ENCODE measurements at regions of chr3 and their contacts with region 1.

Region 1: GRCh38 chr3:156382458-156383346 is 172.2 kb downstream of the SSR3 start:
- DNase-seq: peak; percentile 70
- ATAC-seq: peak; percentile 92
- H3K4me3 Mint-ChIP-seq: no peak overlapping the region
- H3K27ac Mint-ChIP-seq: no peak overlapping the region
- H3K4me1 Mint-ChIP-seq: peaks cover 4% of the 10 kb centered on the region
- H3K27me3 Mint-ChIP-seq: peaks cover 7% of the 10 kb centered on the region
- CTCF ChIP-seq: peak; percentile 73

Region 2: DNA sequence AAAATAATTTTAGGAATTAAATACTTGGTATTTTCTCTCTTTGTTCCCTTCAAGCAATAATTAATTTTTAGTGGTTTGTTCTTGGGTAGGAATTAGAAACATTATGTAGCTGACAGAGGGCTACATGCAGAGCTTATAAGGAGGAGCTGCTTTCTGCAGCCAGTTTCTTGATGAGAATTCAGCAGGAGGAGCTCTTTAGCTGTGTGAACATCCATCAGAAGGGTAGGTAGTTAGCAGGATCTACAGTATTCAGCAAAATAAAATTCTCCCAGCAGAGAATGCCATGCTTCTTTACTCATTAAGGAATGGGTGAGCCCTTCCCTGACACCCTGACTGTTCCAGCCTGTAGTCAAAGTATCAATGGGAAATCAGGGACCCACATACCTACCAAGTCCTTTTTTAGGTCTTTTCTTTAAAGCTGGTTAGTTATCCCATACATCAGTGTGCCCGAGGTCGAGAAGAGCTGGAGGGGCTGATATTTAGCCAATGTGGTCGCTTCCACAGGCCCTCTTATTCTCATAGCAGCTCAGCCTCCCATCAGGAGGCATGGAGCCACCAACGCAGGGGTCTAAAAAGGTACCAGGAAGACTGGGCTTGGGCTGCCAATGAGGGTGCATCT is 208.4 kb before region 1 on chr3:
- CTCF ChIA-PET with region 1: interaction called, 37 read pairs
- POLR2A ChIA-PET with region 1: no interaction called
- DNase-seq: no peak
- ATAC-seq: peak; percentile 71
- H3K4me3 Mint-ChIP-seq: no peak overlapping the region
- H3K27ac Mint-ChIP-seq: no peak overlapping the region
- H3K4me1 Mint-ChIP-seq: no peaks in the 10 kb centered on the region
- H3K27me3 Mint-ChIP-seq: no peaks in the 10 kb centered on the region
- CTCF ChIP-seq: no peak

Region 3: DNA sequence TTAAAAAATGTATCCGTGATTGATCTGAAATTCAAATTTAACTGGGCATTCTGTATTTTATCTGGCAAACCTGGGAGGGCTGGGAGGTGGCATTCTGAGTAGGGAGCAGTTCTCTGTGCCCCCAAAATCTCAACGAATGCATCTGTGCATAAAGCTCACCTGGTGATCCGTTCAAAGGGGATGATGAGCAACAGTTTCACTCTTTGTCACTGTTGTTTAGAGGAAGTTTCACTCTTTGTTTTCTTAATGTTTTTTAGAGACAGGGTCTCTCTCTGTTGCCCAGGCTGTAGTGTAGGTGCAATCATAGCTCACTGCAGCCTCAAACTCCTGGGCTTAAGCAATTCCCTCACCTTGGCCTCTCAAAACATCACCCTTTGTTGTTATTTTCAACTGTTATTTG is 14.5 kb before region 1 on chr3:
- CTCF ChIA-PET with region 1: interaction called, 33 read pairs
- POLR2A ChIA-PET with region 1: no interaction called
- DNase-seq: no peak
- ATAC-seq: no peak
- H3K4me3 Mint-ChIP-seq: no peak overlapping the region
- H3K27ac Mint-ChIP-seq: peak overlapping the region; percentile 85
- H3K4me1 Mint-ChIP-seq: peaks cover 66% of the 10 kb centered on the region
- H3K27me3 Mint-ChIP-seq: no peaks in the 10 kb centered on the region
- CTCF ChIP-seq: no peak

Region 4: DNA sequence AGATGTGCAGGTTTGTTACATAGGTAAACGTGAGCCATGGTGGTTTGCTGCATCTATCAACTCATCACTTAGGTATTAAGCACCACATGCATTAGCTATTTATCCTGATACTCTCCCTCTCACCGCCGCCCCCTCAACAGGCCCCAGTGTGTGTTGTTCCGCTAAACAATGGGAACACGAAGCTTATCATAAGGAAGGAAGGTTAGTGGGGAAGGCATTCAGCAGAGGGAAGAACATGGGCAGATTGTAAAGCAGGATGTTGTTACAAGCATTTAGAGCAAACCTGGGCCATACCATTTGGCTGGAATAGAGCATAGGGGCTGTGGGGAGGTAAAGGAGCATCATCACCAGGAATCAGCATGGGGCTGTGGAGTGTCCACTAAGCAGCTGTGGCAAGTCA is 60.4 kb after region 1 on chr3:
- CTCF ChIA-PET with region 1: interaction called, 13 read pairs
- POLR2A ChIA-PET with region 1: no interaction called
- DNase-seq: no peak
- ATAC-seq: no peak
- H3K4me3 Mint-ChIP-seq: no peak overlapping the region
- H3K27ac Mint-ChIP-seq: no peak overlapping the region
- H3K4me1 Mint-ChIP-seq: peaks cover 3% of the 10 kb centered on the region; the same call in 1 of the 2 replicates
- H3K27me3 Mint-ChIP-seq: no peaks in the 10 kb centered on the region; the same call in 1 of the 2 replicates
- CTCF ChIP-seq: no peak